PC-3 (cell line): ENCODE measurements at regions of chr3 and their contacts with region 1.

Region 1: DNA sequence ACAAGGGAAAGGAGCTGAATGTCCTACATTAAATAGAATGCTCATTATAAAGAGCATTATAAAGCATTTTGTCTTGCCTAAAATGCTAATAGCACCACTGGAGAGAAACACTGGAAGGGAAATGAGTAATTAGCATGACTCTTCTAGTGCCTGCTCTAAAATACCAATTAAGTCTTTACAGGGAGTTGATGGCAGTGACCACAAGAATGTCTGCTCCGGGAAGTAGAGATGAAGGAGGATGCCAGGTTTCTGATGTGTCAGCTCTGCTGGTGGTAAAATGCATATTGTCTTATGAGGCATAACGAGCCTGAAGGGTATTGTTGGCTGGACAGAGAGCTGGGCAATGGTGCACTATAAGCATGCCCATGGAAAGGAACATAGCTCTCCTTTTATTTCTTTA is 49.5 kb downstream of the MYLK start:
- DNase-seq: peak; percentile 89
- ATAC-seq: peak; percentile 97
- H3K4me3 ChIP-seq: no peak overlapping the region
- H3K27ac ChIP-seq: no peak overlapping the region
- H3K4me1 ChIP-seq: peaks cover 13% of the 10 kb centered on the region
- H3K27me3 ChIP-seq: no peaks in the 10 kb centered on the region
- CTCF ChIP-seq: no peak

Region 2: DNA sequence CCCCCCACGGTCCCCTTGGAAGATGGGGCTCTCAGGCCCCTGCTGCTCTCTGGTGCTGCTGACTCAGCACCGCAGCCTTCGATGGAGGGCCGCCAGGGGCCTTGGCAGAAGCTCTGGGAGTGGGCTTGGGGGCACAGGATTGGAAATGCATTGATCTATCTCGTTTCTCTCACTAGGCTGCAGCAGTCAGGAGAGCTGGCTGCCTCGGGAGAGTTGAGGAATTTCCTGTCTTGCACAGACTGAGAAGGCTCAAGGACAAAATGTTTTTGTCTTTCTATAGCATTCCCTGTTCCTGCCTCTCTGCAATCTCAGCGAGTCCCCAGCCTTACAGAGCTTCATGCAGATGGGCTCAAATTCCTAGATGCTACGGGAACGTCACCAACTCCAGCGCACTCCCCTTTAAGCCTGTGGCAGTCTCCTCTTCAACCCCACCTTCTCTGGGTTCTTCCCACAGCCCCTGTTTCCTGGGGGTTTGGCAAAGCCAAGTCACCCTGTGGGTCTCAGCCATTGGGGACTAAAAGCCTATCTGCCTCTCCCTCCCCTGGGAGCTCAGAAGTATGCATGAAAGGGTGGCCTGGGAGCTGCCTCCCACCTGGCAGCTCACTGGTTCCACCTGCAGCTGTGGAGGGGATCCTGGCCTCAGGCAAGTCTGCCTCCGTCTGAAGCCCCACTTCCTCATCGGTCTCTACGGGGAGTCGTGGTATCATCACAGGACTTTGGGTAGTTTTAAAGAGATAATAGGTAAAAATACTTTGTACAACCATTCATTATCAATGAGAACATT is 122.4 kb before region 1 on chr3:
- CTCF ChIA-PET with region 1: no interaction called
- POLR2A ChIA-PET with region 1: no interaction called
- intact Hi-C with region 1: no loop called
- DNase-seq: no peak
- ATAC-seq: no peak
- H3K4me3 ChIP-seq: no peak overlapping the region
- H3K27ac ChIP-seq: no peak overlapping the region
- H3K4me1 ChIP-seq: no peaks in the 10 kb centered on the region
- H3K27me3 ChIP-seq: no peaks in the 10 kb centered on the region
- CTCF ChIP-seq: no peak

Region 3: DNA sequence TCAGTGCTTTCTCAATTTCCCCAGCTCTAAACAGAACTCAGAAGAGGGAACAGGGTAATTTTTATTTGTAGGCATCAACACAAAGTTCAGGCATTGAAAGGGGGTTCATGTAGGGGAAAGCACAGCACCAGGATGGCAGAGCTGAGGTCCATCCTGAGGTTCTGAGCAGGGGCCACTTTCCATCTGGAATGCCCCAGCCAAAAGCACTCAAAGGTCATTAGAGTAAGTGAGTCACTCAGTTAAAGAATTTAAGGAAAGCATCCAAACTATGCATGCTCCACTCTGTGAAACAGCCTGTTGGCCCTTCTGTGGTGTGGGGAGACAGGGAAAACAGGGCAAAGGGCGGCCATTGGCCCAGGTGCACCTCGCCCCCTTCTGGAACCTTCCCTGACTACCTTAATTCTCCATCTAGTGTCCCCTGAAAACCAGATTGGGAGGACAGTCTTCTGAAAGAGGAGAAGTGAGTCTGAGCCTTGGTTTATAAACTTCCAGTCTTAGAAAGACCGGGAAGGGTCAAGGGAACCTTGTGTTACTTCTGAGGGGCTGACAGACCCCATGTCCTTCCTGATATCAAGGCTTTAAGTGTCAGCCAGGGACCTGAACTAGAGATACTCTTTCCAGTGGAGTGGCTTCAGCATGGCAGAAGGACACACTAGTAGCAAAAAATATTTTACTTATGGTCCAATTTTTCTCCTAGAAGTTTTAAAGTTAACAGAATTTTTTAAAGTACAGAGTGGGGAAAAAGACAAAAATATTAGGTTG is 83.8 kb before region 1 on chr3:
- CTCF ChIA-PET with region 1: no interaction called
- POLR2A ChIA-PET with region 1: no interaction called
- intact Hi-C with region 1: loop called (anchors 2 kb)
- DNase-seq: peak; percentile 95
- ATAC-seq: peak; percentile 94
- H3K4me3 ChIP-seq: no peak overlapping the region
- H3K27ac ChIP-seq: 0 out of 2 replicates have a peak overlapping the region, but pooled peaks have one; percentile 9
- H3K4me1 ChIP-seq: peaks cover 23% of the 10 kb centered on the region
- H3K27me3 ChIP-seq: no peaks in the 10 kb centered on the region
- CTCF ChIP-seq: no peak; the same call in 1 of the 2 replicates

Region 4: DNA sequence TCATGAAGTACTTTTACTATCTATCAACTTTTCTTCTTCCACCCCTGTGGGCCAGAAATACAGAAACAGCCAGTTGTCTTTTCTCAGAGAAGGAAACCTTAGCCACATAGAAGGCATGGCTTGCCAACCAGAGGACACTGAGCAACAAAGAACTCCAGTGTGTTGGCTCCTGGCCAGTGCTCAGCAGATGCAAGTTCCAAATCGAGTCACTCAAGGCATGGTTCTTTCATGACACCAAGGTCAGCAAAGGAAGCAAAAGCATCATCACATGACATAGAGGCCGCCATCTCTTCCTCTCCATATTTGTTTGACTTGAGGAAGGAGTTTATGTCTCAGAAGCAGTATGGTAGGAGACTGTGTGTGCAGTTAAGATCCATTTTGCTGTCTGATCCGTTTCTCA is 42.7 kb before region 1 on chr3:
- CTCF ChIA-PET with region 1: no interaction called
- POLR2A ChIA-PET with region 1: no interaction called
- intact Hi-C with region 1: loop called (anchors 5 kb)
- DNase-seq: no peak
- ATAC-seq: no peak
- H3K4me3 ChIP-seq: no peak overlapping the region; the same call in 1 of the 2 replicates
- H3K27ac ChIP-seq: peak overlapping the region; percentile 60; the same call in 1 of the 2 replicates
- H3K4me1 ChIP-seq: peaks cover 38% of the 10 kb centered on the region
- H3K27me3 ChIP-seq: no peaks in the 10 kb centered on the region
- CTCF ChIP-seq: no peak

Region 5: DNA sequence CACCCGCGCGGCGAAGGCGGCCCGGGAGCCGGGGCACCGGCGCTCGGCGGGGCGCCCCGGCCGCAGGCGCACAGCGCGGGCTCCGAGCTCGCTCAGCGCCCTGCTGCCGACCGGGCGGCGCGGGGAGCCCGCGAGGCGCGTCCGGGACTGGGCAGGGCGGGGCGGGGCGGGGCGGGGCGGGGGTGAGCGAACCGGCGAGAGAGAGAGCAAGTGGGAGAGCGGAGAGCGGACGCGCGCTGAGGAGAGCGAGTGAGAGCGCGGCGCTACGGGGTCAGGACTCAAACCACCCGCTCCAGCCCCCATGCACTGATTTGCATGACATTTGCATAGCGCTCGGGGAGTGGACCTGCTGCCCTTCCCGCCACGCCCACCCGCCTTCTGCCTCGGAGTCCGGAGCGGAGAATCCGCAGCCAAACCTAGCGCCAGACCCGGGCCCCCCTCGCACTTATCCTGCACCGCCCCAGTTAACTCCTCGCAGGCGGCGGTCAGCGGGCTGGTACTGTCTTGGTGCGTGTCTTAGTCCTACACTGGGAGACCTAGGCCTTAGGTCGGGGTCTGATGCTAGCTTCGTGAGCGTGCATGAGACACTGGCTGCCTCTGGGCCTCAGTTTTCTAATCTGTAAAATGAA is 49.7 kb after region 1 on chr3 and contains the start of gene MYLK:
- CTCF ChIA-PET with region 1: no interaction called
- POLR2A ChIA-PET with region 1: no interaction called
- intact Hi-C with region 1: no loop called
- DNase-seq: peak; percentile 85
- ATAC-seq: peak; percentile 92
- H3K4me3 ChIP-seq: peak within 1 kb of the TSS; percentile 81
- H3K27ac ChIP-seq: no peak within 1 kb of the TSS
- H3K4me1 ChIP-seq: peaks cover 8% of the 10 kb centered on the region
- H3K27me3 ChIP-seq: no peaks in the 10 kb centered on the region
- CTCF ChIP-seq: no peak
- total RNA-seq, gene MYLK: 6.9 and 8.7 TPM in 2 replicates